ENCODE measurements at regions of chr15 and their contacts with region 1.

Region 1: DNA sequence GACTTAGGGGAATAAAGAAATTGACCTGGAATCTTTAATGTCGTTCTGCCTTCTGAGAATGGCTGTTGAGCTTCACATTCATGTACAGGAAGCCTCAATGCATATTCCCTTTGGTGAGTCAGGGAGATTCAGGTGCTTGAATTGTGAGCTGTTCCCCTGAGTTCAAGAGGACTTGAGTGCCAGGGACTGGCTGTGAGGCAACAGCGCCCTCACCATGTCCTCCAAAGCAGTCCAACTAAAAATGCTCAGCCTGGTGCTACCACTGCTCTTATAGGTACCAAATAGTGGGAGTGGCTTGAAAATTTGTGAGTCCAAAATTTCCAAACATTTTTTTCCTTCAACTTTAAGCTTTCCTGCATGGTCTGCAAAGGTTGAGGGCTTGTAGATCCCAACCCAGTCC is 54.1 kb downstream of the LEO1 start:
- DNase-seq: peak; percentile 44 to 89
- ATAC-seq: peak; percentile 95 to 99
- H3K4me3 ChIP-seq: no peak overlapping the region
- H3K27ac ChIP-seq: no peak overlapping the region
- H3K4me1 ChIP-seq: peaks cover 4% of the 10 kb centered on the region; the same call in 1 of the 3 replicates
- CTCF ChIP-seq: peak; percentile 76
- EP300 ChIP-seq: no peak
- POLR2A ChIP-seq: no peak
- RAD21 ChIP-seq: peak; percentile 77 to 88

Region 2: DNA sequence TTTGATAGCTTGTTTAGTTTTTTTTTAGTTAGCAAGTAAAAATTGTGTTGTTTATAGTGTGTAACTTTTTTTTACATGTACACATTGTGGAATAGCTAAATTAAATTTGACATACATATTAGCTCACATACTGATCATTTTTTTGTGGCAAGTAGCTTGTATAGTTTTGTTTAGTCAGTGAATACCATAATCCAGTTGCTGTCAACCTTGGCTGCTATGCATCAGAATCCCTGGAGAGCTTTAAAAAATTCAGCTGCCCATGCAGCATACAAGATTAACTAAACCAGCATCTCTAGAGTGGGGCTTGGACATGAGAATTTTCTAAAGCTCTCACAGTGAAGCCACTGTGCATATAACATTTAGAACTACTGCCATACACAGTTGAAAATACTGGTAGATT is 34.1 kb before region 1 on chr15:
- CTCF ChIA-PET with region 1: interaction called, 15 read pairs
- POLR2A ChIA-PET with region 1: no interaction called
- DNase-seq: no peak
- ATAC-seq: no peak
- H3K4me3 ChIP-seq: no peak overlapping the region
- H3K27ac ChIP-seq: peak overlapping the region; percentile 2 to 55; a peak in 4 of 6 replicates
- H3K4me1 ChIP-seq: peaks cover 85% of the 10 kb centered on the region
- CTCF ChIP-seq: no peak
- EP300 ChIP-seq: no peak
- POLR2A ChIP-seq: no peak
- RAD21 ChIP-seq: no peak

Region 3: GRCh38 chr15:51935466-51936104 is 18.1 kb after region 1 on chr15:
- CTCF ChIA-PET with region 1: interaction called, 15 read pairs
- POLR2A ChIA-PET with region 1: no interaction called
- DNase-seq: no peak
- ATAC-seq: peak; percentile 13 to 35; a peak in 4 of 6 replicates
- H3K4me3 ChIP-seq: no peak overlapping the region
- H3K27ac ChIP-seq: no peak overlapping the region
- H3K4me1 ChIP-seq: peaks cover 5% of the 10 kb centered on the region; the same call in 2 of the 3 replicates
- CTCF ChIP-seq: no peak
- EP300 ChIP-seq: no peak
- POLR2A ChIP-seq: no peak
- RAD21 ChIP-seq: no peak

Region 4: DNA sequence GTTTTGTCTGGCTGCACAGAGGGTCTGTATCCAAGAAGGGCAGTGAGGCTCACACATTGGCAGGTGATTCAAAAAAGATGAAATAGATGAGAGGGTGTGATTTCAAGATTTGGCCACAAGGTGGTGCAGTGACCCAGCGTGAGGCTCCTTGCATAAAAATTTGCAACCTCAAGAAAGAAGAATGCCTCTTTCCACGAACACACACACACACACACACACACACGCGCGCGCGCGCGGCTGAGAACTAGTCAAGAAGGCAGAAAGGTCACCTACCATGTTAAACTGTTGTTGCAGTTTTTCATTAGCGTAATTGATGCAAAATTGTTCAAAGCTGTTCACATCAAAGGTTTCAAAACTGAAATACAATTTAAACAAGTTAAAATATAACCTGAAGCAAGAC is 338.9 kb after region 1 on chr15:
- CTCF ChIA-PET with region 1: no interaction called
- POLR2A ChIA-PET with region 1: no interaction called
- DNase-seq: peak; percentile 80 to 86
- ATAC-seq: peak in 1 of 2 experiments; percentile 37; a peak in 4 of 6 replicates
- H3K4me3 ChIP-seq: no peak overlapping the region
- H3K27ac ChIP-seq: no peak overlapping the region; a peak in 1 of 6 replicates
- H3K4me1 ChIP-seq: peaks cover 50% of the 10 kb centered on the region
- CTCF ChIP-seq: peak; percentile 96
- EP300 ChIP-seq: no peak
- POLR2A ChIP-seq: no peak
- RAD21 ChIP-seq: peak; percentile 97 to 99